Vagina (tissue), 2 donors: ENCODE measurements at regions of chr7 and their contacts with region 1.

Region 1: DNA sequence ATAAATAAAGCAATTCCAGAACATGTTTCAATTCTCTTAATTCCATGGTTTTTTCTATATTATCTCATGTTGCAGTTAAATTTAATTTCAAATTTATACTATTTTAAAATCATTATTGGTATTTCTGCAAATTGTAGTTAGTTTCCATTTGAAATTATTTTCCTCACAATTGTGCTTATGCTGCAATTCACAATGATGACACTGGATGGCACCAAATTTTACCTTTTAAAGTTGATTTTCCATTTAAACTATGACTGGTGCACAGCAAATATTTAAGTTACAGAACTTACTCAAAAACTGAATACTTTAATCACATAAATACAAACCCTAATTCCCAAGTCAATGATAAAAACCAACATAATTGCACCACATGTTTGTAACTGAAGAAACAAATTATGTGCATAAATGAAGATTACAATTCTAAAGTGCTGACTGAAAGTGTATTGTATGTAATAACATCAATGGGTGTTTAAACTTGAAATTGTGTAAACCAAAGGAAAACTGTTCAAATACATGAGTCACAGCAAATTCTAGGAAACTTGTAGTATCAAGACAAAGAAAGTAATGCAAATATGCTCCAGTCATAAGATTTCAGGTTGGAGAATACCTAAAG is 75.3 kb upstream of the AASS start:
- DNase-seq: no peak
- H3K4me3 ChIP-seq: no peak overlapping the region
- H3K27ac ChIP-seq: no peak overlapping the region
- H3K4me1 ChIP-seq: no peaks in the 10 kb centered on the region
- H3K27me3 ChIP-seq: no peaks in the 10 kb centered on the region
- CTCF ChIP-seq: peak; percentile 12 to 59 (median 39)
- POLR2A ChIP-seq: no peak

Region 2: DNA sequence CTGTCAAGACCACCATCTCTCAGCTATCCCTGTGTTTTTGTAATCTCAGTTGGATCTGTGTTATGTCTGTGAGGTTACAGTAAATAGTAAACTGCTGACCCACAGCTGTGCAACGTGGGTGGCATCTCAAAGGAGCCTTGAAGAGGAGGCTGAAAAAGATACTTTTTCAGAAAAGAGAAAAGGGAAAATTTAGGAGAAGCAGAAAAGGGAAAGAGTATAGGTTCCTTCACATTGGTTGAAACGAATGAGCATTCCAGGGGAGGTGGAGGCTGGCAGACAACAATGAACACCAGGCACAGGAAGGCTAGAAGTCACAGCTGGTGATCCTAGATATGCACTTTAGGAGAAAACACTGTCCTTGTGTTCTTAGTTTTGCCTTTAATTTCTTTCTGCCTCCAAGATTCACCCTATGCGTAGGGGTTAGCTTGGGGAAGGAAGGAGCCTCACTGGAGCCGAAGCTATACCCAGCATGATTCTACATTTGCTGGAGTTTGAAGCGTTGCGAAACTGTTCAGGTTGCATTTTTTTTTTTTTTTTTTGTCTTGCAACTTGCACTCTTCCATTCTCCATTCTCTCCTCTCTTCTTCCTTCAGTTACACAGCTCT is 1212.5 kb before region 1 on chr7:
- intact Hi-C with region 1: no loop called
- DNase-seq: no peak
- H3K4me3 ChIP-seq: no peak overlapping the region
- H3K27ac ChIP-seq: no peak overlapping the region
- H3K4me1 ChIP-seq: peaks cover 11% of the 10 kb centered on the region
- H3K27me3 ChIP-seq: no peaks in the 10 kb centered on the region
- CTCF ChIP-seq: no peak
- POLR2A ChIP-seq: no peak

Region 3: DNA sequence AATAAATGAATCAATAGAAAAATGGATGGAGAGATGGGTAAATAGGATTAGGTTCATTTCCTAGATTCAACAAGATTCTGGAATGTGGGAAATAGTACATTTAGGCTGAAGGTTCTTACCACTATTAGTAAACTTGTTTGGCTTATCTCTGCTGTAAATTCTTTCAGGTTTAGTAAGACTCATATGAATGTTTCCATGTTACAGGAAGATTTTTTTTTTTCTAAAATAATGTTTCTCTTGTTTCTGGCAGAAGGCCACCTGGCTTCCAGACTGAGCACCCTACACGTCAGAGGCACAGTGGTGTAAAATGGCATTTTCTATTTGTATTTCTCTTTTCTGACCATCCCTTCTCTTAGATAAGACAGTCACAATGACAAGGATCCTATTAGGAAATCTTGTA is 52.7 kb before region 1 on chr7:
- intact Hi-C with region 1: no loop called
- DNase-seq: no peak
- H3K4me3 ChIP-seq: no peak overlapping the region
- H3K27ac ChIP-seq: no peak overlapping the region
- H3K4me1 ChIP-seq: no peaks in the 10 kb centered on the region
- H3K27me3 ChIP-seq: no peaks in the 10 kb centered on the region
- CTCF ChIP-seq: no peak
- POLR2A ChIP-seq: no peak

Region 4: DNA sequence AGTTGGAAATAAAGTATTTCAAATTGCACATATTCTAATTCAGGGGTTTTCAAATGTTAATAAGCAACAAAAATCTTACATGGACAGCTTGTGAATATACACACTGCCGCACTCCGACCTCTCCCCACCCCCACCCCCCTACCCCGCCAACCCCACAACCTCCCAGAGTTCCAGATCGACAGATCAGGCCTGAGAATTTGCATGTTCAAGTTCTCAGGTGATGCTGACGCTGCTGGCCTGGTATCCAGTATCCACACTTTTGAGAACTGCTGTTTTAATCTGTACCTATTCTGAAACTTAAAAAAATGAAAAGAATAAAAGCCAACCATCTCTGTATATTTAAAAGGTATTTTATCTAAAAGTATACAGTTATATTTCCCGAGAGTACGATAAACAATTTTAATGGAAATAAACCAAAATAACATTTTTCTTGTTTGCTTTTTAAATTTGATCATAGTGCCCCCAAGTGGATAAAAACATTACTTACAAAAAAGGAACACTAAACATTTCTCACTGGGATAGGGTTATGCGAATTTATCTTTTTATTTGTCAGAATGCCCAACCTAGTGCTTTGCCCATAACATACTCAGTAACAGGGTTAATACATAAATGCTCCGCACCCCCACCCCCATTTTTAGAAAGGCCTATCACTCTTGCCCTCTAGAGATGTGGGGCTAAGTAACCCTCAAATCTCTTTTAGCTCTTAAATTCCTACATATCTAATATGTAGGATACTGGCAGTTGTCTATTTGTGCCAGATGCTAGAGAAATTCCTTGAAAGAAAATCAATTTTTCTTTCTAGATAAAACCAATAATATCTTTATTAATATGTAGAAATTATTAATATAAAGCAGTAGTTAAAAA is 313.3 kb after region 1 on chr7:
- intact Hi-C with region 1: loop called (anchors 10 kb)
- DNase-seq: no peak
- H3K4me3 ChIP-seq: no peak overlapping the region
- H3K27ac ChIP-seq: no peak overlapping the region
- H3K4me1 ChIP-seq: no peaks in the 10 kb centered on the region
- H3K27me3 ChIP-seq: no peaks in the 10 kb centered on the region
- CTCF ChIP-seq: no peak
- POLR2A ChIP-seq: no peak